ENCODE measurements at regions of chr14 and their contacts with region 1.

Region 1: DNA sequence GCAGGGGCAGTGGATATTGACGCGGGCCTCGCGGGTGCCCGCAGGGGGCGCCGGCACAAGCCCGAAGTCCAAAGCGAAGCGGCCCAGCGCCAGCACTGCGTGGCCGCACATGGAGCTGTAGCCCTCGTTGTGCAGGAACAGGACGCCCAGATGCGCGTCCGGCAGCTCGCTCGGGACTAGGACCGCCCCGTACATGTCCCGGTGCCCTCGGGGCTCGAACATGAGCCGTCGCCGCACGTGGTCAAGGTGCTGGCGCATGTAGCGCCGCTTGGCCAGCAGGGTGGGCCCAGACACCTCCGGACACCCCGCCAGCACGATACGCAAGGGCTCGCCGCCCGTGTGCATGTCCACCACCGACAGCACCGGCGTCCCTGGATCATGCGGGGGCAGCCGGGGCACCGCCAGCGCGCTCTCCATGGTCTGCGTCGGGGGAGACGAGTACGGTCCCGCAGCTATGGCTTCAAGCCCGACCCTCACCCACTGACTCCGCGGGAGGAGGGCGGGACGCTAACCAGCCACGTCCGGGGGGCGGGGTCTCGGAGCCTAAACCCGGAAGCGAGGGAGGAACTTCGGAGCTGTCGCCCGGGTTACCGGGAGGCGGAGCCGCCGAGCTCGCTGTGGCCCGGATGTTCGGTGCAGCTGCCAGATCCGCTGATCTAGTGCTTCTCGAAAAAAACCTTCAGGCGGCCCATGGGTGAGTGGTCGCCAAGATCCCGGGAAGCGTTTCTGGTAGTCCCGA is at the starts of genes JKAMP and L3HYPDH:
- DNase-seq: peak; percentile 99
- ATAC-seq: peak; percentile 97
- H3K4me3 Mint-ChIP-seq: peak within 1 kb of the TSS; percentile 92
- H3K27ac Mint-ChIP-seq: peak within 1 kb of the TSS; percentile 89
- H3K4me1 Mint-ChIP-seq: peaks cover 57% of the 10 kb centered on the region
- H3K27me3 Mint-ChIP-seq: no peaks in the 10 kb centered on the region
- total RNA-seq, gene JKAMP: 18.0 to 20.2 TPM
- total RNA-seq, gene L3HYPDH: 9.3 to 11.8 TPM

Region 2: DNA sequence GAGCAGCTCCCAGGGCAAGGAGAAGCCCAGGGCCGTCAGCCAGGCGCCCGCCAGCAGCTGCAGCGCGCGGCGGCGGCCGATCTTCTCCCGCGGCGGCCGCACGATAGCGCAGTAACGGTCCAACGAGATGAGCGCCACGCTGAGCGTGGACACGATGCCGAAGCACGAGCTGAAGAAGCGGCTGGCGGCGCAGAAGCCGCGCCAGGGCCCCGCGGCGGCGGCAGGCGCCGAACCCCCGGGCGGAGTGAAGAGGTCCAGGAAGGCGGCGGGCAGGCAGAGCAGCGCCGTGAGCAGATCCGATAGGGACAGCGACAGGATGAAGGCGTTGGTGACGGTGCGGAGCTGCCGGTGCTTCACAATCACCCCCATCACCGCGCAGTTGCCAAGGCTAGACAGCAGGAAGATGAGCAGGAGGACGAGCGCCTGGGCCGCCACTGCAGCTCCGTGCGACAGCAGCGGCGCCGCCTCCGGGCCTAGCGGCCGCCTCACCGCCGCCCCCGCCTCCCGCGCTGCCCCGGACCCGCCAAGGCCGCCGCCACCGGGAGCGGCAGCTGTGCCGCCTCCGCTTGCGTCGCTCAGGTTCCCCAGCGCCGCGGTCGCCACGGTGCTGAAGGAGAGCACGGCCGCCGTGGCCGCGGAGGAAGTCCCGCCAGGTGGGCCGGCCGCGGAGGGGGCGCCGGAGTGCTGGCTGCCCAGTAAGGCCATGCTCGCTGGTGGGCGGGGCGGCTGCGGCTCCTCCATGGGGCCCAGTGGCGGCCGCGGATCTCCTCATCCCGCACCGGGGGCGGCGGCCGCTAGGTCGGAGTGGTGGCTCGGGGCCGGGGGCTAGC is 19.4 kb before region 1 on chr14:
- CTCF ChIA-PET with region 1: interaction called, 10 read pairs
- POLR2A ChIA-PET with region 1: interaction called, 9 read pairs
- intact Hi-C with region 1: loop called (anchors 1 to 2 kb)
- DNase-seq: peak; percentile 68
- ATAC-seq: peak; percentile 77
- H3K4me3 Mint-ChIP-seq: peak overlapping the region; percentile 73
- H3K27ac Mint-ChIP-seq: no peak overlapping the region
- H3K4me1 Mint-ChIP-seq: peaks cover 7% of the 10 kb centered on the region
- H3K27me3 Mint-ChIP-seq: peaks cover 3% of the 10 kb centered on the region

Region 3: DNA sequence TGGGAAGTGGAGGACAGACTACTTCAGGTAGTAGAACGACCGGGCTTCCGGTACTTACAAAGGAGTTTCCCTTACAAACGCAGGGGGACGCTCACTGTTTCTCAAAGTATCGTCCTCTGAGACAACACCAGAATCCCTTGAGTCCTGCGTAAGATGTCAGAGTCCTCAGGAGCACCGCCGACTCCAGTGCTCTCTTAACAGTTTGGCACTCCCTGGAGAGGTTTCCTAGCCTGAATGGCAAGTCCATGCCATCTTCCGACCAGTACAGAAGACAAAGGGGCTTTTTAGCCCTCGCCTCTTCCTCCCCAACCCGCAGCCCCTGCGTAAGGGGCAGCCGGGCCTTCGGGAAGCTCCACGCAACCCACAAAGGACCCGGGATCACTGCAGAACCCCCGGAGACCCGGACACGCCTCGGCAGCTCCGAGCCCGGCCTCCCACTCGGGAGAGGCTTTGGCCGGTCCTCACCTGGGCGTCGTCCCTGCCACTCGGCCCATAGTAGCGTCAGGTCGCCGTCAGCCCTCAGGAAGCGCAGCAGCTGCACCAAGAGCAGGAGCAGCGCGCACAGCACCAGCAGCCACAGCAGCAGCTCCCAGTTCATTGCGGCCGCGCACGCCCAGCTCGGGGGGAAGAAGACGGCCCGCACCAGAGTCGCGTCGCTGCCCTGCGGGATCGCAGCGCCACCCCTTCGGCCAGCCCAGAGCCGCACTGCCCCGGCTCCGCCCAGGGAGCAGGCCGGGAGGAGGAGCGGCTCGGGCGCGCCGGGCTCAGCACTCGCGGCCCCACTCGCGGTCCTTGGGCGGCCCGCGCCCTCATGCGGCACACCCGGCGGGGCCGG is 680.9 kb after region 1 on chr14 and contains the start of gene DHRS7:
- CTCF ChIA-PET with region 1: no interaction called
- POLR2A ChIA-PET with region 1: no interaction called
- intact Hi-C with region 1: loop called in 1 of 2 experiments (anchors 1 kb)
- DNase-seq: peak; percentile 79
- ATAC-seq: peak; percentile 88
- H3K4me3 Mint-ChIP-seq: peak within 1 kb of the TSS; percentile 99
- H3K27ac Mint-ChIP-seq: peak within 1 kb of the TSS; percentile 99
- H3K4me1 Mint-ChIP-seq: peaks cover 41% of the 10 kb centered on the region
- H3K27me3 Mint-ChIP-seq: no peaks in the 10 kb centered on the region
- total RNA-seq, gene DHRS7: 27.9 to 46.3 TPM

Measured in activated CD4-positive, alpha-beta T cell treated with anti-CD3 and anti-CD28 coated beads for 36 hours (primary cell).